ENCODE measurements at regions of chr4 and their contacts with region 1.

Region 1: DNA sequence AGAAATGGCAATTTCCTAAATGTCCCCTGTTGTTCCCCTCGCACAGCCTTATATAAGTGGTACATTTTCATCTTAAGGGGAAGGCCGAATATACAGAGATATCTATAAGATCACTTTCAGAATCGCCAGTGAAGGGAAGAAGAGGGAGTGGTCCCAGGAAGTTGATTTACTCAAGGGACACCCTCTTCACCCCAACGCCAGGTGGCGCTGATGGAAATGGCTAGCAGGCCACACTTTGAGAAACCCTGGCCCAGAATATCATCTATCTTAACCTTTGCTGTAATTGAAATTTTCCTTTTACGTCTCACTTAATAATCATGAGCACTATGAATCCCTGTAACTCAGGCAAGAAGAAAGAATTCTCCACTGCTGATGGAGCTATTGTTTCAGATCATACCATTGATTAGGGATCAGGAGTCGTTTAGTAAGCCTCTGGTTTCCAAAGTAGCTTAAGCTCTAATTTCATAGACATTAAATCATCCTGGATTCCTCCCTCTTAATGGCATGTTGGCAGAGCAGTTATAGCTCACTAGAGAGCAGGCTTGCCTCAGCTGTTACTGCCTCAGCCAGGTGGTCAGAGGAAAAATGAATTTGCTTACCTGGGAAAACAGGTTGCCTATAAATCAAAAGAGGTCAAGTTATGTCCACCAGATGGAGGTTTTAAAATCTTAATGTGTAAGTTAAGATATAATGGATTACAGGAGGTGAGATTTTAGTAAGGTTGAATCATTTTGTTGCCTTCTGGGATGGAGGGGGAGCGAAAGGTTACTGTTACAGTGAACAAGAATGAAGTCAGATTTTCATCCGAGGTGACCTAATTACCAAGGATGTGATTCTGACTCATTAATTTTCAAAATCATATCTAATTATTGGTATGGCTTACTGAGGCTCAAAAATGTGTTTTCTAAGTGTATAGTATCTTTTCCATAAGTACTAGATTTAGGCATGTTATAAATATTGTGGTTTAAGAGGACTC is 941.2 kb upstream of the TENM3 start:
- DNase-seq: no peak

Region 2: GRCh38 chr4:181272422-181272821 is 29.6 kb before region 1 on chr4:
- intact Hi-C with region 1: loop called in 1 of 2 experiments (anchors 2 kb)
- DNase-seq: no peak